Esophagus squamous epithelium (tissue), 5 donors: ENCODE measurements at regions of chr20 and their contacts with region 1.

Region 1: GRCh38 chr20:5451643-5452210 is 135.0 kb upstream of the PROKR2 start:
- DNase-seq: no peak
- H3K4me3 ChIP-seq: no peak overlapping the region
- H3K27ac ChIP-seq: no peak overlapping the region
- H3K4me1 ChIP-seq: no peaks in the 10 kb centered on the region
- H3K27me3 ChIP-seq: peaks cover 0 to 13% (median 0%) of the 10 kb centered on the region in 4 donors
- CTCF ChIP-seq: no peak
- POLR2A ChIP-seq: no peak

Region 2: GRCh38 chr20:4795394-4795793 is 656.3 kb before region 1 on chr20:
- intact Hi-C with region 1: loop called (anchors 10 kb)
- DNase-seq: no peak
- H3K4me3 ChIP-seq: no peak overlapping the region
- H3K27ac ChIP-seq: peak overlapping the region in 2 of 4 donors; percentile 15 to 46
- H3K4me1 ChIP-seq: peaks cover 0 to 4% (median 0%) of the 10 kb centered on the region in 3 donors
- H3K27me3 ChIP-seq: no peaks in the 10 kb centered on the region
- CTCF ChIP-seq: no peak
- POLR2A ChIP-seq: no peak

Region 3: DNA sequence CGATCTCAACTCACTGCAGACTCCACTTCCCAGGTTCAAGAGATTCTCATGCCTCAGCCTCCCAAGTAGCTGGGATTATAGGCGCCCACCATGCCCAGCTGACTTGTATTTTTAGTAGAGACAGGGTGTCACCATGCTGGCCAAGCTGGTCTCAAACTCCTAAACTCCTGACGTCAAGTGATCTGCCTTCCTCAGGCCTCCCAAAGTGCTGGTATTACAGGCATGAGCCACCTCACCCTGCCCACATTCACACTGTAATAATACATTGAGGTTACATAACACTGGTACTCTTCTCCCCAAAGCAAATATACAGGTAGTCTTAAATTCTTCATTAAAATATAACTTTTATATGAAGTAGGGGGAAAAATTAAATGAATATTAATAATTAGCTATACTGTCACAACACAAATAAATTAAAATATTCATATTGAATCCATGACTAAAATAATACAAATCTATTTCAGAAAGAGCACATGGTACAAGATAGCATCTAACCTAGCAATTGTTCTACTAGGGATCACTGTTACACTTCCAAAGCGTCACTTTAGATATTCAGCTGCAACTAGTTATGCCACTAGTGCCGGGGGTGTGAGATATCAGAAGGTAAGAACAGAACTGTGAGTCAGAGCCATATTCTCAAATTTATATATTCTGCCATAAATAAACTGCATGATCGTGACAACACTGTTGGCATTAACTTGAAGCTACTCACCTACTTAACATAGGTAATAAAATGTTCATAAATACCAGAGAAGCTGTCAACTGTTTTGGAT is 129.4 kb after region 1 on chr20:
- intact Hi-C with region 1: no loop called
- DNase-seq: no peak
- H3K4me3 ChIP-seq: no peak overlapping the region
- H3K27ac ChIP-seq: no peak overlapping the region
- H3K4me1 ChIP-seq: no peaks in the 10 kb centered on the region
- H3K27me3 ChIP-seq: no peaks in the 10 kb centered on the region
- CTCF ChIP-seq: no peak
- POLR2A ChIP-seq: no peak